Naive thymus-derived CD8-positive, alpha-beta T cell (primary cell): ENCODE measurements at regions of chr12 and their contacts with region 1.

Region 1: GRCh38 chr12:53295070-53295890 is at the start of gene PFDN5:
- DNase-seq: peak; percentile 72 to 94 (median 87)
- ATAC-seq: peak; percentile 90 to 93
- H3K4me3 Mint-ChIP-seq: peak within 1 kb of the TSS; percentile 95 to 100 (median 99)
- H3K27ac Mint-ChIP-seq: peak within 1 kb of the TSS; percentile 97 to 100 (median 99)
- H3K4me1 Mint-ChIP-seq: peaks cover 10 to 61% (median 46%) of the 10 kb centered on the region in 4 donors
- H3K27me3 Mint-ChIP-seq: no peaks in the 10 kb centered on the region
- polyA plus RNA-seq, gene PFDN5: 1,657 to 1,928 (median 1,896) TPM

Region 2: GRCh38 chr12:53205747-53206419 is 89.4 kb before region 1 on chr12:
- POLR2A ChIA-PET with region 1: interaction called, 12 read pairs
- DNase-seq: peak in 2 of 10 donors; percentile 44 to 55
- ATAC-seq: peak; percentile 26 to 58
- H3K4me3 Mint-ChIP-seq: peak overlapping the region; percentile 77 to 95 (median 90)
- H3K27ac Mint-ChIP-seq: peak overlapping the region; percentile 83 to 98 (median 92)
- H3K4me1 Mint-ChIP-seq: peaks cover 39 to 92% (median 74%) of the 10 kb centered on the region in 4 donors
- H3K27me3 Mint-ChIP-seq: no peaks in the 10 kb centered on the region

Region 3: GRCh38 chr12:53213348-53213747 is 81.9 kb before region 1 on chr12:
- POLR2A ChIA-PET with region 1: interaction called, 22 read pairs
- DNase-seq: peak; percentile 69 to 90 (median 83)
- ATAC-seq: peak; percentile 72 to 73
- H3K4me3 Mint-ChIP-seq: peak overlapping the region in 2 of 10 donors; percentile 10 to 54
- H3K27ac Mint-ChIP-seq: peak overlapping the region; percentile 52 to 93 (median 80)
- H3K4me1 Mint-ChIP-seq: peaks cover 59 to 83% (median 78%) of the 10 kb centered on the region in 4 donors
- H3K27me3 Mint-ChIP-seq: no peaks in the 10 kb centered on the region

Region 4: GRCh38 chr12:53267999-53268647 is 27.2 kb before region 1 on chr12 and contains the start of gene ESPL1:
- POLR2A ChIA-PET with region 1: interaction called, 16 read pairs
- DNase-seq: peak; percentile 77 to 91 (median 85)
- ATAC-seq: peak; percentile 90 to 95
- H3K4me3 Mint-ChIP-seq: peak within 1 kb of the TSS; percentile 92 to 100 (median 96)
- H3K27ac Mint-ChIP-seq: peak within 1 kb of the TSS; percentile 88 to 96 (median 94)
- H3K4me1 Mint-ChIP-seq: peaks cover 12 to 22% (median 20%) of the 10 kb centered on the region in 4 donors
- H3K27me3 Mint-ChIP-seq: peaks cover 0 to 4% (median 0%) of the 10 kb centered on the region in 5 donors
- polyA plus RNA-seq, gene ESPL1: not detected

Region 5: GRCh38 chr12:53308276-53308675 is 13.0 kb after region 1 on chr12:
- POLR2A ChIA-PET with region 1: interaction called, 15 read pairs
- DNase-seq: no peak
- ATAC-seq: no peak
- H3K4me3 Mint-ChIP-seq: no peak overlapping the region
- H3K27ac Mint-ChIP-seq: peak overlapping the region in 6 of 10 donors; percentile 3 to 93 (median 46)
- H3K4me1 Mint-ChIP-seq: peaks cover 0 to 6% (median 2%) of the 10 kb centered on the region in 4 donors
- H3K27me3 Mint-ChIP-seq: no peaks in the 10 kb centered on the region

Region 6: DNA sequence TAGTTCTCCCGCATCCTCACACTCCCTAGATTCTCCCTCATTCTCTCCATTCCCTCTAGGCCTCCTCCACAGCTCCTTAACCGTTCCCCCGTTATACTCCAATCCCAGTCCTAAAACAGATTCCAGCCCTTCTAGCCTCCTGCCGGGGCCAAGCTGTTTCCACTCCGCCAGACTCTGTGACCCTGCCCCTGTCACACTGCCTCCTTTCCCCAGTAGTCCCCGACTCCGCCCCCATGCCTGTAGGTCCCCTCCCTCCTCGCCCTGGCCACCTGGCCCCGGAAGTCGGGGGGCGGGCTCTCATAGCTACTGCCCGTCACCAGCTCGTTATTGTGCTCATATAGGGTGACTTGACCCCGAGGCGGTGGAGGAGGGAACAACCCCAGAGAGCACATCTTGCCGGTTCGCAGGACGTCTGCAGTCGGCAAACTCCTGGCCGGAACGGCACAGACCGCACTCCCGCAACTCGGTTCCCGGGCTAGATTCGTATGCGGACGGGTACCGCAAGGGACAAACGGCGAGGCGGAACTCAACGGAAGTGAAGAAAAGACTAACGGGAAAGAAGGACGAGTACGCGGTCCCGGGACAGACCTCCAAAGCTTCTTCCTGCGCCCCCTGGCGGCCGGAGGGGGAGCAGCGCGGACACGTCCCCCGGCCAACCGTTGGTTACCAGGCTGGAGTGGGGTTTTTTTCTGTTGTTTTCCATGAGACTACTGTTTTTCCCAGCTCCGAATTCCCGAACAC is 26.0 kb after region 1 on chr12 and contains the start of gene AAAS:
- POLR2A ChIA-PET with region 1: interaction called, 52 read pairs
- DNase-seq: peak; percentile 87 to 99 (median 92)
- ATAC-seq: peak; percentile 77 to 78
- H3K4me3 Mint-ChIP-seq: peak within 1 kb of the TSS; percentile 90 to 100 (median 98)
- H3K27ac Mint-ChIP-seq: peak within 1 kb of the TSS; percentile 96 to 99 (median 97)
- H3K4me1 Mint-ChIP-seq: peaks cover 28 to 51% (median 45%) of the 10 kb centered on the region in 4 donors
- H3K27me3 Mint-ChIP-seq: no peaks in the 10 kb centered on the region
- polyA plus RNA-seq, gene AAAS: 34.1 to 57.2 (median 39.3) TPM

Region 7: DNA sequence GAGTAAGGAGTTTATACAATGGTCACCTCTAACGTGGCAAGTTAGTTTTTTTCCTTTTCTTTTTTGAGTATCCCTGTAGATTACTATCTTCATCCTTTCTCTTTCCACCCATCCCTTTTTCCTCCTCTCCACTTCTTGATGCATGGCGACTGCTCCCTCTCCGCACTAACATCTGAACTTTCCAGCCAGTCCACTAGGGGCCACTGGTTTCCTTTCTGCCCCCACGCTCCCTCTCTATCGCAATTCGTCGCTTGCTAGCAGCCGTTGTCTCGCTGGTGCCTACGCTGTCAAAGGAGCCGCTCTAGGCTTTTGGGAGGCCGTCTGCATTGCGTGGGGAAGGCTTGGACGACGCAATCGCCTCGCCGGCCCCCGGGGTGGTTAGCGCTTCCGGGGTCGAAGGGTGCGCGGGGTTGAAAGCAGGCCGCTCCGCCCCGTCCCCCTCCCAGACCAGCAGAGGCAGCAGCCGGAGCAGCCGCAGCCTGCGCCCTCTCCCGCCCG is 156.4 kb after region 1 on chr12 and contains the start of gene PCBP2:
- POLR2A ChIA-PET with region 1: no interaction called
- DNase-seq: peak; percentile 92 to 99 (median 96)
- ATAC-seq: peak; percentile 95 to 96
- H3K4me3 Mint-ChIP-seq: peak within 1 kb of the TSS; percentile 90 to 100 (median 99)
- H3K27ac Mint-ChIP-seq: peak within 1 kb of the TSS; percentile 89 to 100 (median 100)
- H3K4me1 Mint-ChIP-seq: peaks cover 19 to 45% (median 38%) of the 10 kb centered on the region in 4 donors
- H3K27me3 Mint-ChIP-seq: peaks cover 0 to 1% (median 0%) of the 10 kb centered on the region in 5 donors
- polyA plus RNA-seq, gene PCBP2: 143 to 157 (median 152) TPM